Activated T-helper 2 cell treated with anti-CD3 and anti-CD28 coated beads, Interferon-gamma antibody, Interleukin-2, Interleukin-4, amounts not matched to agents 10 μg/mL and 5 μg/mL and 100 μg/mL, durations not matched to agents 14 hours and 24 hours and 36 hours (primary cell): ENCODE measurements at regions of chr11 and their contacts with region 1.

Region 1: GRCh38 chr11:95699631-95700470 is 89.7 kb downstream of the FAM76B start:
- DNase-seq: no peak
- H3K4me3 Mint-ChIP-seq: peak overlapping the region; percentile 62
- H3K27ac Mint-ChIP-seq: peak overlapping the region; percentile 93
- H3K4me1 Mint-ChIP-seq: peaks cover 54% of the 10 kb centered on the region
- H3K27me3 Mint-ChIP-seq: no peaks in the 10 kb centered on the region

Region 2: GRCh38 chr11:94472916-94473799 is 1226.7 kb before region 1 on chr11:
- intact Hi-C with region 1: no loop called
- DNase-seq: peak; percentile 10
- H3K4me3 Mint-ChIP-seq: peak overlapping the region; percentile 46
- H3K27ac Mint-ChIP-seq: peak overlapping the region; percentile 82
- H3K4me1 Mint-ChIP-seq: peaks cover 48% of the 10 kb centered on the region
- H3K27me3 Mint-ChIP-seq: no peaks in the 10 kb centered on the region

Region 3: DNA sequence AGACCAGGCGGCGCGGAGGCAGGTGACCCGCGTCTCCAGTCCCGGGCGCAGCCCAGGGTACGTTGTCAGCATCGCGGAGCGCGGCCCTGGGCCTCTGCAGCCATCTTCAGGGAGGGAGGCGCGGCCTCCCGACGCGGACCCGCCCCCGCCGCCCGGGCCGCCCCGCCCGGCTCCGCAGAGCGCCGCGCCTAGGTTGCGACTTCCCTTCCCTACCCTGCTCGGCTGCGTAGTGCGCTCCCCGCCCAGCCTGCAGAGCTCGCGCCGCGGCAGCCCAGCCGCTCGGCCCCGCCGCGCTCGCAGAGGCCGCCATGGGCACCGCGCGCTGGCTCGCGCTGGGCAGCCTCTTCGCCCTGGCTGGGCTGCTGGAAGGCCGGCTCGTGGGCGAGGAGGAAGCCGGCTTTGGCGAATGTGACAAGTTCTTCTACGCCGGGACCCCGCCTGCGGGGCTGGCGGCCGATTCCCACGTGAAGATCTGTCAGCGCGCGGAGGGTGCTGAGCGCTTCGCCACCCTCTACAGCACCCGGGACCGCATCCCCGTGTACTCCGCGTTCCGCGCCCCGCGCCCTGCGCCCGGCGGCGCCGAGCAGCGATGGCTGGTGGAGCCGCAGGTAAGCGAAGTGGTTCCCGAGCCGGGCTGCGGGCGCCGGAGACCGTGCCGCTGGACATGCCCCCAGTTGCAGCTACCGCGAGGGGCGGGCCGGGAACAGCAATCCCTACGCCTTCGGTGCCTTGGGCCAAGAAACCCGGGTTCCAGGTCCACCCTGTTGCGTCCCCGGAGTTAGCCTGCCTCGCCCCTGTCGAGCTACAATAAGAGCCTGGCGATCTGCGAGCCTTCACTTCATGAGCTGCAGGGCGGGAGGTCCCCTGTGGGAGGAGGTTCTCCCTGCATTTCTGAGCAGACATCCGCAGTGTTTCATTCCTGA is 610.0 kb before region 1 on chr11 and contains the start of gene ENDOD1:
- intact Hi-C with region 1: loop called (anchors 5 kb)
- DNase-seq: peak; percentile 85
- H3K4me3 Mint-ChIP-seq: peak within 1 kb of the TSS; percentile 88
- H3K27ac Mint-ChIP-seq: peak within 1 kb of the TSS; percentile 95
- H3K4me1 Mint-ChIP-seq: peaks cover 66% of the 10 kb centered on the region
- H3K27me3 Mint-ChIP-seq: no peaks in the 10 kb centered on the region
- total RNA-seq, gene ENDOD1: 33.7 and 34.9 TPM in 2 replicates

Region 4: GRCh38 chr11:95567685-95568084 is 132.2 kb before region 1 on chr11:
- intact Hi-C with region 1: no loop called
- DNase-seq: no peak
- H3K4me3 Mint-ChIP-seq: no peak overlapping the region
- H3K27ac Mint-ChIP-seq: no peak overlapping the region
- H3K4me1 Mint-ChIP-seq: peaks cover 31% of the 10 kb centered on the region
- H3K27me3 Mint-ChIP-seq: no peaks in the 10 kb centered on the region

Region 5: GRCh38 chr11:95661162-95661561 is 38.7 kb before region 1 on chr11:
- intact Hi-C with region 1: loop called (anchors 1 kb)
- DNase-seq: no peak
- H3K4me3 Mint-ChIP-seq: no peak overlapping the region
- H3K27ac Mint-ChIP-seq: no peak overlapping the region
- H3K4me1 Mint-ChIP-seq: peaks cover 26% of the 10 kb centered on the region
- H3K27me3 Mint-ChIP-seq: no peaks in the 10 kb centered on the region

Region 6: GRCh38 chr11:95680169-95680929 is 19.5 kb before region 1 on chr11:
- intact Hi-C with region 1: loop called (anchors 1 kb)
- DNase-seq: no peak
- H3K4me3 Mint-ChIP-seq: no peak overlapping the region
- H3K27ac Mint-ChIP-seq: peak overlapping the region; percentile 71
- H3K4me1 Mint-ChIP-seq: peaks cover 87% of the 10 kb centered on the region
- H3K27me3 Mint-ChIP-seq: no peaks in the 10 kb centered on the region

Region 7: DNA sequence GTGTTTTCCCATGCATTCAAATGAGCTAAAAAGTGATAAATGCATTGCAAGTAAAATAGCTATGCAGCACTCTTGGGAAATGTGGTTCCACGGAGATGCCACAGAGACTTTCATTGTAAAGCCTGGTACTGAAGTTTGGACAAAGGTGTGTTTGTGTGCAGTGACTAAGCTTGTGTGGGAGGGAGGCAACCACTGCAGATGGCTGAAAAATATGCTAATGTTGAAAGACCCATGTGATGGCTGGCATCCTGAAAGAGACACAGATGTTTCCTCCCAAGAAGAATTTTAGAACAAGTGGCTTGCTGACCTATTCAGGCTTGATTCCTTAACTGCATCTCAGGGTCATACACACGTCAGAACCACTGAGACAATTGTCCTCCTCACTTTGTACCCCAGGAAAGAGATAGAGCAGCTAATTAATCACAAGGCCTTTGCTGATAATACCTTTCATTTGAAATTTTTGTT is 16.0 kb after region 1 on chr11:
- intact Hi-C with region 1: loop called (anchors 1 kb)
- DNase-seq: no peak
- H3K4me3 Mint-ChIP-seq: peak overlapping the region; percentile 19
- H3K27ac Mint-ChIP-seq: peak overlapping the region; percentile 82
- H3K4me1 Mint-ChIP-seq: peaks cover 60% of the 10 kb centered on the region
- H3K27me3 Mint-ChIP-seq: no peaks in the 10 kb centered on the region